ENCODE measurements at regions of chr5 and their contacts with region 1.

Region 1: GRCh38 chr5:62779010-62779422 is 200.4 kb downstream of the LRRC70 start:
- DNase-seq: peak; percentile 66 to 70
- ATAC-seq: peak; percentile 96 to 97
- H3K4me3 ChIP-seq: no peak overlapping the region
- H3K27ac ChIP-seq: no peak overlapping the region
- H3K4me1 ChIP-seq: no peaks in the 10 kb centered on the region
- CTCF ChIP-seq: peak; percentile 83
- EP300 ChIP-seq: no peak
- POLR2A ChIP-seq: no peak
- RAD21 ChIP-seq: peak; percentile 85 to 88

Region 2: DNA sequence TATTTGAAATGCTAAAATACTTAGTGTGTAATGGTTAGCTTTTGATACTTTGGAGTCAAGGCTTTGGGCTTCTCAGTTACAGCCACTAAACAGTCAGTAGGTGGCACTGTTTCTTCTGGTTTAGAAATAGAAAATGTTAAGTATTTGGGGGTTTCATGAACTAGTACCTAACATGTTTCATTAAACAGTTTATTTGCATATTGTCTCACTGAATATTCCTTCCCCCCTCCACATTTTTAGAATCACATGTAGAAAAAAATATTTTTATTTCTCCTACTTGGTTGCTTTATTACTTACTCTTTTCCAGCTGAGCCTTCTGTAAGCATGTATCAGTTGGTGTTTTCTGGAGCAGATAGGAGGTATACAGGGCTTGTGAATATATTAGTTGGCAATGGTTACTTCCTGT is 318.4 kb before region 1 on chr5:
- CTCF ChIA-PET with region 1: interaction called, 28 read pairs
- POLR2A ChIA-PET with region 1: no interaction called
- DNase-seq: peak; percentile 17 to 51
- ATAC-seq: peak; percentile 78 to 81
- H3K4me3 ChIP-seq: no peak overlapping the region
- H3K27ac ChIP-seq: no peak overlapping the region
- H3K4me1 ChIP-seq: peaks cover 3% of the 10 kb centered on the region; the same call in 1 of the 3 replicates
- CTCF ChIP-seq: peak; percentile 84
- EP300 ChIP-seq: no peak
- POLR2A ChIP-seq: no peak
- RAD21 ChIP-seq: peak; percentile 65 to 81

Region 3: DNA sequence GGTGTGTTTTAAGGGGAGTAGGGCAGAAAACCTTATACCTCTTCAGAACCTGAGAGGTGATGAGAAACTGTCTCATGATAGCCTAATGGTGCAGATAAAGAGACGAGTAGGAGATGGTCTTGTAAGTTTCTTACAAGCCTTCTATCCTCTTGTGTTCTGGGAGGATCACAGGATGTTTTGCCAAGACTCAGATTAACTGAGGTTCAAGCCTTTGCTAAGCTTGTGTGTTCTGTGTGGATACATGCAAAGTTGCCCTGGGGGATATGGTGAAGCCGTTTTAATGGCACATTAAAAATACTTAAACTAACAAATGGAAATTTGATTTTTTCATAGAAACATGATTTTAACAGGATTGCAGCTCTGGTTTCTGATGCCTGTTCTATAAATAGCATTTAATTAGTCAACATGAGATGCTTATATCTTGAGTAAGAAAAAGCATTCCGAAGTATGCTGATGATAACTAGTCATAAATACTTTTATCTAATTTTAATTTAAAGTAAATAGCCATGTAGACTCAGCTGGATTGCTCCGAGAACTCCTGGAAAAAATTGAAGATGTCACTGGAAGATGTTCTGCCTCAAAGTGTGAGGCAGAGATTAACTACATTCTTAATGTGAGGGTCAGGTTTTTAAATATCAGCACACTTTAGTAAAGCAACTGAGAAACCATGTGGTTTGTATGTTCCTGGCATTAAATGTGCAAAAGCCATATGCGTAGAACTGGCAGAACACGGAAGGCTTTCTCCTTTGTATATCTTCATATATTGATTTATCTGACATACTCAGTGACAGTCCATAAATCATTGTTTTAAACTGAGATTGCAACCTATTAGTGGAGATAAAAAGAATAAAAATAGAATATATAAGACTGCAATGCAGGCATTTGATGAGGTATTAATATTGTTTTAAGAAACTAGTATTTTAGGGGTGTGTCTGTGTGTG is 312.8 kb before region 1 on chr5:
- CTCF ChIA-PET with region 1: interaction called, 23 read pairs
- POLR2A ChIA-PET with region 1: no interaction called
- DNase-seq: no peak
- ATAC-seq: no peak
- H3K4me3 ChIP-seq: no peak overlapping the region
- H3K27ac ChIP-seq: no peak overlapping the region
- H3K4me1 ChIP-seq: no peaks in the 10 kb centered on the region
- CTCF ChIP-seq: no peak
- EP300 ChIP-seq: no peak
- POLR2A ChIP-seq: no peak
- RAD21 ChIP-seq: no peak

Region 4: GRCh38 chr5:63262185-63262981 is 483.4 kb after region 1 on chr5:
- CTCF ChIA-PET with region 1: no interaction called
- POLR2A ChIA-PET with region 1: no interaction called
- DNase-seq: peak in 1 of 2 experiments; percentile 11
- ATAC-seq: peak in 1 of 2 experiments; percentile 74; a peak in 4 of 6 replicates
- H3K4me3 ChIP-seq: no peak overlapping the region
- H3K27ac ChIP-seq: peak overlapping the region; percentile 43 to 70; a peak in 4 of 6 replicates
- H3K4me1 ChIP-seq: peaks cover 13% of the 10 kb centered on the region; the same call in 2 of the 3 replicates
- CTCF ChIP-seq: no peak
- EP300 ChIP-seq: no peak
- POLR2A ChIP-seq: no peak
- RAD21 ChIP-seq: no peak